ENCODE measurements at regions of chr1 and their contacts with region 1.

Region 1: GRCh38 chr1:158496374-158496773 is 24.4 kb downstream of the OR10R2 start:
- DNase-seq: peak in 1 of 14 experiments; percentile 12
- ATAC-seq: no peak
- H3K4me3 ChIP-seq: no peak overlapping the region
- H3K4me3 Mint-ChIP-seq: no peak overlapping the region
- H3K27ac ChIP-seq: no peak overlapping the region
- H3K27ac Mint-ChIP-seq: no peak overlapping the region
- H3K4me1 ChIP-seq: no peaks in the 10 kb centered on the region
- H3K4me1 Mint-ChIP-seq: no peaks in the 10 kb centered on the region
- H3K27me3 ChIP-seq: peaks cover 6 to 17% of the 10 kb centered on the region in 2 experiments
- H3K27me3 Mint-ChIP-seq: peaks cover 10% of the 10 kb centered on the region
- CTCF ChIP-seq: no peak

Region 2: GRCh38 chr1:158274797-158275196 is 221.6 kb before region 1 on chr1:
- CTCF ChIA-PET with region 1: no interaction called
- POLR2A ChIA-PET with region 1: no interaction called
- intact Hi-C with region 1: loop called in 1 of 2 experiments (anchors 10 kb)
- DNase-seq: no peak
- ATAC-seq: no peak
- H3K4me3 ChIP-seq: no peak overlapping the region
- H3K4me3 Mint-ChIP-seq: no peak overlapping the region
- H3K27ac ChIP-seq: no peak overlapping the region
- H3K27ac Mint-ChIP-seq: no peak overlapping the region
- H3K4me1 ChIP-seq: no peaks in the 10 kb centered on the region
- H3K4me1 Mint-ChIP-seq: peaks cover 3% of the 10 kb centered on the region
- H3K27me3 ChIP-seq: no peaks in the 10 kb centered on the region
- H3K27me3 Mint-ChIP-seq: no peaks in the 10 kb centered on the region
- CTCF ChIP-seq: no peak